ENCODE measurements at regions of chr11 and their contacts with region 1.

Region 1: DNA sequence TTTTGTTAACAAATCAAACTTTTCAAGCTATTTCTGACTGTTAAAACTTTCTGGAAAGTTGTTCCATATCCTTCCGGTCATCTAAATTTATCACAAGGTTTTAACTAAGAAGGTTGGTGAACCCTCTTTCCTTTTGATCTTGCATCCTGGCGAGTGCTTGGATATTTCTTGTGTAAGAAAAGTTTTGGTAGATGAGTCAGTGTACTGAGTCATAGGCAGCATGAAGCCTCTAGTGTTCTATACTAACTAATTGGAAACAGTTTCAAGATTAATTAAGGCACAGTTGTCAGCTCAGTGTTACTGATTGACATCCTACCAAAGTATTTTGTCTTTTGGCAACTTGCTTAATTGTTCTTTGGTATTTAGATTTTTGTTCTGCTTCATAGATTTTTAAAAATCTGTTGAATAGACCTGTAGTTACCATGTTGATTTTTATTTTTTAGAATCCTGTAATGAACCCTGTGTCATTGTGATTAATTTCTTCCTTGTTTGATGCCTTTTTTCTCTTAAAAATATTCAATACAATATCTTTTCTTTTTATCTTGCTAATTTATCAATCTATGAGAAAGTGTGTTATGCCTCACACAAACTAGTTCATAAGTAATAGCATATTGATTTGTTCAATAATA is 38.0 kb downstream of the METTL15 start:
- DNase-seq: no peak
- H3K4me3 ChIP-seq: no peak overlapping the region
- H3K27ac ChIP-seq: no peak overlapping the region
- H3K4me1 ChIP-seq: no peaks in the 10 kb centered on the region
- H3K27me3 ChIP-seq: no peaks in the 10 kb centered on the region
- CTCF ChIP-seq: no peak
- POLR2A ChIP-seq: no peak

Region 2: GRCh38 chr11:27857014-27857413 is 289.2 kb before region 1 on chr11:
- intact Hi-C with region 1: loop called (anchors 10 kb)
- DNase-seq: no peak
- H3K4me3 ChIP-seq: no peak overlapping the region
- H3K27ac ChIP-seq: no peak overlapping the region
- H3K4me1 ChIP-seq: no peaks in the 10 kb centered on the region
- H3K27me3 ChIP-seq: no peaks in the 10 kb centered on the region
- CTCF ChIP-seq: no peak
- POLR2A ChIP-seq: no peak

Region 3: DNA sequence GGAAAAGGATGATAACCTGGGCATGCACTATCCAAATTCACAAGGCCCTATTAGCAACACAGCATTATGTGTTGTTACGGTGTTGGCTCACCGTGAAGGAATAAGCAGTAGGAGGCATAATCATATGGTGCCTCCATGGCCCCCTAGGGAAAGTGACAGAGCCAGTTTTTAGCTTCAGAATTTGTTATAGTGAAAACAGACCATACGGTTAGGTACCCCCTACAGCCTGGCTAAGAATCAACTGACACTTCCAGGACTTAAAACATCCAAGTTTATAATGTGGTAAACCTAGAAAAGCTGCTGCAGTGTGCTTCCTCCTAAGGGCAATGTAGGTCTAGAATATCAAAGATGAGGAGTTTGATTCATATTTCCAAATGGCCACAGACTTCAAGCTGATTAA is 68.7 kb before region 1 on chr11:
- intact Hi-C with region 1: no loop called
- DNase-seq: no peak
- H3K4me3 ChIP-seq: no peak overlapping the region
- H3K27ac ChIP-seq: no peak overlapping the region
- H3K4me1 ChIP-seq: no peaks in the 10 kb centered on the region
- H3K27me3 ChIP-seq: no peaks in the 10 kb centered on the region
- CTCF ChIP-seq: no peak
- POLR2A ChIP-seq: no peak

Measured in breast epithelium (tissue), 4 donors.